ENCODE measurements at regions of chr4 and their contacts with region 1.

Region 1: GRCh38 chr4:140373328-140374129 is at the start of gene SCOC:
- DNase-seq: peak; percentile 99
- H3K4me3 Mint-ChIP-seq: no peak within 1 kb of the TSS
- H3K27ac Mint-ChIP-seq: no peak within 1 kb of the TSS
- H3K4me1 Mint-ChIP-seq: peaks cover 32% of the 10 kb centered on the region
- H3K27me3 Mint-ChIP-seq: no peaks in the 10 kb centered on the region
- total RNA-seq, gene SCOC: 46.9 to 48.4 TPM

Region 2: DNA sequence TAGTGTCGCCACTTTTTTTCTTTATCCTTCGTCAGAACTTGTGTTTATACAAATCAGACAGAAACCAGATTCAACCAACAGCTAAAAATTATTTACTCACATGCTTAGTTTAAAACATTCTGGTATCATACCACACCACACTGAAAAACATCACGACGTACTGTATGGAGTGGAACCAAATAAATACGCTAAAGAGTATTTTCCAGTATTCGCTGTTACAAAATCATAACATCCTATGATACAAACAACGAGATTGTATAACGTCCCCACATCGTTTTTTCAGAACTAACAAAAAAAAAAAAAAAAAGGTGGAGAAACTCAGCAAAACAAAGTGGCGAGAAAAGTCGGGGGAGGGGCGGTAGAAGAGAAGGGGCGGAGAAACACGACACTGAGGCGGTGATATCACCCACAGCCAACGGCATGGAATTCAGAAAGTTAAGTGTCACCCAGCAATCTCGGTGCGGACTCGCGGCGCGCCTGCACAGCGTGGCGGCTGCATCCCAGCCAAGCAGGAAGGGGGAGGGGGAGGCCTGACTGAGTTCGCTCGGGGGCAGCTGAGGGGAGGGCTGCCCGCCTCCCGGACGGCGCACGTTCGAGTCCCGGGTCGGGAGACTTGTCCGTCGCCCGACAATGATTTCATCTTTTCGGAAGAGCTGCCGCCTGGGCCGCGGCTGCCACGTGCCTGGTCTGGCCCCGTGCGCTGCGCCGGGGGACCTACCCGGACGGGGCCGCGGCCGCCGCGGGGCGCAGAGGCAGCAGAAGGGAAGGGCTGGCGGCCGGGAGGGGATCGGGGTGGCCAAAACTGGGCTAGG is 818.4 kb before region 1 on chr4:
- CTCF ChIA-PET with region 1: no interaction called
- POLR2A ChIA-PET with region 1: no interaction called
- intact Hi-C with region 1: loop called (anchors 5 kb)
- DNase-seq: peak; percentile 91
- H3K4me3 Mint-ChIP-seq: peak overlapping the region; percentile 95
- H3K27ac Mint-ChIP-seq: peak overlapping the region; percentile 96
- H3K4me1 Mint-ChIP-seq: peaks cover 62% of the 10 kb centered on the region
- H3K27me3 Mint-ChIP-seq: no peaks in the 10 kb centered on the region

Region 3: GRCh38 chr4:140213749-140214148 is 159.8 kb before region 1 on chr4:
- CTCF ChIA-PET with region 1: no interaction called
- POLR2A ChIA-PET with region 1: no interaction called
- intact Hi-C with region 1: no loop called
- DNase-seq: no peak
- H3K4me3 Mint-ChIP-seq: no peak overlapping the region
- H3K27ac Mint-ChIP-seq: no peak overlapping the region
- H3K4me1 Mint-ChIP-seq: no peaks in the 10 kb centered on the region
- H3K27me3 Mint-ChIP-seq: peaks cover 3% of the 10 kb centered on the region

Region 4: GRCh38 chr4:140252742-140253555 is 120.6 kb before region 1 on chr4:
- CTCF ChIA-PET with region 1: no interaction called
- POLR2A ChIA-PET with region 1: no interaction called
- intact Hi-C with region 1: loop called (anchors 5 kb)
- DNase-seq: peak; percentile 63
- H3K4me3 Mint-ChIP-seq: peak overlapping the region; percentile 55
- H3K27ac Mint-ChIP-seq: no peak overlapping the region
- H3K4me1 Mint-ChIP-seq: peaks cover 17% of the 10 kb centered on the region
- H3K27me3 Mint-ChIP-seq: peaks cover 20% of the 10 kb centered on the region

Region 5: DNA sequence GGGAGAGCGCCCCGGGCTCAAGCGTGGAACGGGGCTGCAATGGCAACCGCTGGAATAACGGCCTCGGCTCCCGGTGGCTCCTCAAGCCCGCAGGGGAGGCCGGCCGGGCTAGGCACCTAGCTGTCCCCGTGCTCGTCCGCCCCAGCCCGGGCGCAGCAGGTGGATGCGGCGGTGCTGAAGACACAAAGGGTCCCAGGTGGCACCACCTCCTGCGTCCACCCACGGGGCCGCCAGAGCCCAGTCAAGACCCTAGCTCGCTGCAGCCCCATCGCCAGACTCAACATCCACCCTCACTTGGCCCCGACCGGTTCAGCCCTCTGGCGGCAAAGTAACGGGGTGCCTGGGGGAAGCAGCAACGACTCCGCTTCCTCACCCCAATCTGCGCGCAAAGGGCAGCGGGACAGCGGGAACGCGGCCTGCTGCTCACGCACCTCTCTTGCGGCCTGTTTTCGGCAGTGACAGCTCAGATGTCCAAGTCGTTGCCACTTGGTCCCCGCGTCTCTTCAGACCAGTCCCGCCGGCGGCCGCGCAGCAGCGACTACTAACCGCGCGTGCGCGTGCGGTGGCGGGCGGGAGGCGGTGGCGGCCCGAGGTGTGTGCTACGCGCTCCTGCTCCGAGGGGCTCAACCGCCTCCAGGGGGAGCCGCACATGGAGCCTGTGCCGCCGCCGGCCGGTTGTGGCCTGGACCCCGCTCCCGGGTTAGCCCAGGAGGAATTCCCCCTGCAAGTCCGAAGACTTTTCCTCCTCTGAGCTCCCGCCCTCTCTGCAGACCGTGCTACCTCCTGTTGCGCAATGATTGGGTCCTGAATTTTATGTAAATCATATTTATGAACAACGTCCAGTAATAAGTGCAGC is 53.8 kb after region 1 on chr4 and contains the start of gene CLGN:
- CTCF ChIA-PET with region 1: interaction called, 14 read pairs
- POLR2A ChIA-PET with region 1: no interaction called
- intact Hi-C with region 1: no loop called
- DNase-seq: peak; percentile 47
- H3K4me3 Mint-ChIP-seq: peak within 1 kb of the TSS; percentile 72
- H3K27ac Mint-ChIP-seq: no peak within 1 kb of the TSS
- H3K4me1 Mint-ChIP-seq: peaks cover 6% of the 10 kb centered on the region
- H3K27me3 Mint-ChIP-seq: peaks cover 43% of the 10 kb centered on the region
- total RNA-seq, gene CLGN: 0.10 TPM in 1 of 2 experiments, not detected in the other

Region 6: DNA sequence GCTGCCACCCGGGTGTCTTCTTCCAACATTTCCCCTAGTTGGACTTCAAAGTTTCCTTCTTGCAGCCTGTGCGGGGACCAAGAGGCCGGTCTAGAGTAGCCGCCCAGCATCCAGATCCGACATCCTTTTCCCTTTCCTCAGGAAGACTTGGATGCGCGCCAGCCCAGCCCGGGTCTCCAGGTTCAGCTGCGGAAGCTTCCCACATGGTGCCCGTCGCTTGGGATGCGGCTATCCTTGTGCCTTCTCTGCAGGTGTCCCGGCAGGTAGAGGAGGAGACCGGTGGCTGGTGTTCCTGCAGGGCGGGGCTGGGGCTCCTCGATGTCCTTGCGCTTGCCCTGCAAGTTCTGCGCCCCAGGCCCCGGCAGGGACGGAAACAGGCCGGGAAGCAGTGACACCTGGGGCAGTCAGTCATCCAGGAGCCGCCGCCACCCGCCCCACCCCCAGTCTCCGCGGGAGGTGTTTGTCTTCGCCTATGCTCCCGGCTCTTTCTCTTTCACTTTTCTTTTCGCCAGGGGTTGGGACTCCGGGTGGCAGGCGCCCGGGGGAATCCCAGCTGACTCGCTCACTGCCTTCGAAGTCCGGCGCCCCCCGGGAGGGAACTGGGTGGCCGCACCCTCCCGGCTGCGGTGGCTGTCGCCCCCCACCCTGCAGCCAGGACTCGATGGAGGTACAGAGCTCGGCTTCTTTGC is 1262.7 kb after region 1 on chr4 and contains the start of gene IL15:
- CTCF ChIA-PET with region 1: no interaction called
- POLR2A ChIA-PET with region 1: no interaction called
- intact Hi-C with region 1: loop called (anchors 2 kb)
- DNase-seq: peak; percentile 86
- H3K4me3 Mint-ChIP-seq: peak within 1 kb of the TSS; percentile 88
- H3K27ac Mint-ChIP-seq: peak within 1 kb of the TSS; percentile 64
- H3K4me1 Mint-ChIP-seq: peaks cover 27% of the 10 kb centered on the region
- H3K27me3 Mint-ChIP-seq: peaks cover 2% of the 10 kb centered on the region
- total RNA-seq, gene IL15: 1.4 to 2.2 TPM

Measured in activated CD4-positive, alpha-beta memory T cell treated with anti-CD3 and anti-CD28 coated beads for 36 hours (primary cell).